ENCODE measurements at regions of chr16 and their contacts with region 1.

Region 1: GRCh38 chr16:70800781-70801530 is at the start of gene VAC14:
- DNase-seq: peak; percentile 90
- H3K4me3 ChIP-seq: peak within 1 kb of the TSS; percentile 77 to 94 (median 91)
- H3K27ac ChIP-seq: peak within 1 kb of the TSS; percentile 49
- H3K4me1 ChIP-seq: peaks cover 22% of the 10 kb centered on the region
- H3K27me3 ChIP-seq: no peaks in the 10 kb centered on the region
- CTCF ChIP-seq: no peak
- POLR2A ChIP-seq: peak; percentile 82
- total RNA-seq, gene VAC14: 37.6 and 44.4 TPM in 2 replicates

Region 2: DNA sequence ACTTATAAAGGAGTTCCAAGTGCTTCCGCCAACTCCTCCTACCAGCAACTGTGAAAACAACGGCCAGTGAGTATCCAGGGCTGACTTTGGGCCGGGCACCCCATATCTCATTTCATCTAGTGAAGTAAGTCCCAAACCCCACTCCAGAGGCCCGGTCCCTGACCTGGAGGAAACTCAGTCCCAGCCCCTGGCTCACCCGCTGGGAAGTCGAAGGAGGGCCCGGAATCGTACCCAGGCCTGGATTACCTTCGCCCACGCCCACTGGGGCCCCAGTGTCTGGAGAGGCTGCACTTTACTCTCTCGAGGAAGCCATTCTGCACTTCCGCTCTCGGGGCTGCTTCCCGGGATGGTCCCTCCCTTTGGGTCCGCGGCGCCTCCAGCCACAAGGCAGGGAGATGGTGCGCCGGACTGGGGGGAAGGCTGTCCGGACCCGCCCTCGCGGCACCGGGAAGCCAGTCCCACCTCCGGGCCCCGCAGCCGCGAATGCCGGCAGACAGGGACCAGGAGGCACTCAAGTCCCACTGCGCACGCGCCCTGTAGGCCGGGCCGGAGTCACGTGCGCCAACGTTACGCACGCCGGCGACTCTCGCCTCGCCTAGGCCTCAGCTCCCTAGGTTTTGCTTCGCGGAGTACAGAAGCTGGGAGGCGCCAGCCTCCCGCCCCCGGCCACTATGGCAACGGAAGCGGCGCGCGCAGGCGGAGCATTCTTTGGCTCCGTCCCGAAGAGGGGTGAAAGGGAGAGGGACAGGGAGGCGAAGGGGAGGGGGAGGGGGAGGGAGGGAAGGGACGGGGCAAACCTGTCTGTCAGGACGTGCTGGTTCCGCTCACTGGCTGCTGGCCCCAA is 488.2 kb after region 1 on chr16 and contains the start of gene CMTR2:
- CTCF ChIA-PET with region 1: no interaction called
- POLR2A ChIA-PET with region 1: no interaction called
- dilution Hi-C with region 1: no loop called
- intact Hi-C with region 1: loop called (anchors 5 kb)
- DNase-seq: peak; percentile 96
- H3K4me3 ChIP-seq: peak within 1 kb of the TSS; percentile 49 to 84 (median 59)
- H3K27ac ChIP-seq: peak within 1 kb of the TSS; percentile 79
- H3K4me1 ChIP-seq: peaks cover 18% of the 10 kb centered on the region
- H3K27me3 ChIP-seq: peaks cover 1 to 3% of the 10 kb centered on the region in 2 experiments
- CTCF ChIP-seq: no peak
- POLR2A ChIP-seq: peak; percentile 89
- total RNA-seq, gene CMTR2: 15.5 and 18.8 TPM in 2 replicates

Region 3: GRCh38 chr16:71499775-71500364 is 698.9 kb after region 1 on chr16:
- CTCF ChIA-PET with region 1: no interaction called
- POLR2A ChIA-PET with region 1: no interaction called
- dilution Hi-C with region 1: no loop called
- intact Hi-C with region 1: no loop called
- DNase-seq: peak; percentile 71
- H3K4me3 ChIP-seq: no peak overlapping the region
- H3K27ac ChIP-seq: no peak overlapping the region
- H3K4me1 ChIP-seq: no peaks in the 10 kb centered on the region
- H3K27me3 ChIP-seq: no peaks in the 10 kb centered on the region
- CTCF ChIP-seq: peak; percentile 46 to 65
- POLR2A ChIP-seq: no peak

Measured in endothelial cell of umbilical vein (primary cell).